ENCODE measurements at regions of chr10 and their contacts with region 1.

Region 1: GRCh38 chr10:31808258-31809218 is 120.1 kb downstream of the ARHGAP12 start:
- DNase-seq: peak; percentile 28 to 51 (median 35)
- ATAC-seq: peak; percentile 51 to 86 (median 80)
- H3K4me3 ChIP-seq: peak overlapping the region in 11 of 12 donors; percentile 18 to 60 (median 47)
- H3K27ac ChIP-seq: peak overlapping the region; percentile 13 to 86 (median 80)
- H3K4me1 ChIP-seq: peaks cover 0 to 12% (median 0%) of the 10 kb centered on the region in 12 donors
- H3K27me3 ChIP-seq: no peaks in the 10 kb centered on the region
- CTCF ChIP-seq: peak; percentile 37 to 79 (median 62)
- POLR2A ChIP-seq: no peak

Region 2: GRCh38 chr10:30736685-30737232 is 1071.8 kb before region 1 on chr10:
- intact Hi-C with region 1: loop called in 1 of 10 experiments (anchors 10 kb)
- DNase-seq: peak in 1 of 5 donors; percentile 57
- ATAC-seq: peak in 3 of 4 donors; percentile 79 to 91 (median 89)
- H3K4me3 ChIP-seq: no peak overlapping the region
- H3K27ac ChIP-seq: peak overlapping the region in 1 of 12 donors; percentile 71
- H3K4me1 ChIP-seq: peaks cover 0 to 5% (median 0%) of the 10 kb centered on the region in 12 donors
- H3K27me3 ChIP-seq: no peaks in the 10 kb centered on the region
- CTCF ChIP-seq: no peak
- POLR2A ChIP-seq: no peak

Region 3: GRCh38 chr10:31456468-31456867 is 352.1 kb before region 1 on chr10:
- intact Hi-C with region 1: no loop called
- DNase-seq: no peak
- ATAC-seq: no peak
- H3K4me3 ChIP-seq: no peak overlapping the region
- H3K27ac ChIP-seq: no peak overlapping the region
- H3K4me1 ChIP-seq: peaks cover 0 to 32% (median 10%) of the 10 kb centered on the region in 12 donors
- H3K27me3 ChIP-seq: no peaks in the 10 kb centered on the region
- CTCF ChIP-seq: no peak
- POLR2A ChIP-seq: no peak

Region 4: DNA sequence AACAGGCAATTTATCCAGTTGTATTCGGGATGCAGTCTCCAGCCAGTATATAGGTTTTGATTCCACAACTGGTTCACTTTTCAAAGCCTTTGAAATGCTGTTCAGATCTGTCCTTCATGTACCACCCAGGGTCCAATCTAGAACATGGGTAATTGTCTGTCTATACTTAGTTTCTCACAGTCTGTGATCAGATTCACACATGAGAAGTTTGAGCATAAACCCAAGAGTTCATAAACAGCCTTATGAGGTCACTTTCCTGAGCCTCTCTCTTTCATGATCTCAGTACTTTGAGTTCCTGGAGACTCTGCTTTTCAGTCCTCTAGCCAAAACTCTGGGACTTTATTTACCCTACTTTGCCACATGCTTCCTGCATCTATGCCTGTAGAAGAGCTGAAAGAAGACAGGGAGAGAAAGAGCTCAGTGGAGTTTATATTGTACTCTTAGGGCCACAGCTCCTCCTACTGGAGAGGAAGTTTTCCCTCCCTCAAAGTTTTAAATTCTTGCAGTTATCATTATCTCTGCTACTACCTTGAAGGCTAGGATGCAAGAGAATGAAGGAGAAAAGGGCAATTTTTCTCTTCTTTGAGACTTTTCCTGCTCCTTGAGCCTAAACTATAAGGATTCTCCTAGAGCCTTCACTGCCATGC is 317.6 kb before region 1 on chr10:
- intact Hi-C with region 1: loop called in 2 of 10 experiments (anchors 10 kb)
- DNase-seq: no peak
- ATAC-seq: peak in 3 of 4 donors; percentile 53 to 73 (median 53)
- H3K4me3 ChIP-seq: no peak overlapping the region
- H3K27ac ChIP-seq: no peak overlapping the region
- H3K4me1 ChIP-seq: peaks cover 0 to 4% (median 0%) of the 10 kb centered on the region in 12 donors
- H3K27me3 ChIP-seq: no peaks in the 10 kb centered on the region
- CTCF ChIP-seq: peak; percentile 38 to 70 (median 57)
- POLR2A ChIP-seq: no peak

Region 5: GRCh38 chr10:31515819-31516402 is 292.6 kb before region 1 on chr10:
- intact Hi-C with region 1: no loop called
- DNase-seq: no peak
- ATAC-seq: no peak
- H3K4me3 ChIP-seq: no peak overlapping the region
- H3K27ac ChIP-seq: no peak overlapping the region
- H3K4me1 ChIP-seq: peaks cover 0 to 22% (median 2%) of the 10 kb centered on the region in 12 donors
- H3K27me3 ChIP-seq: no peaks in the 10 kb centered on the region
- CTCF ChIP-seq: no peak
- POLR2A ChIP-seq: no peak

Region 6: GRCh38 chr10:31656851-31657433 is 151.6 kb before region 1 on chr10:
- intact Hi-C with region 1: loop called in 1 of 10 experiments (anchors 2 kb)
- DNase-seq: no peak
- ATAC-seq: peak; percentile 57 to 79 (median 70)
- H3K4me3 ChIP-seq: no peak overlapping the region
- H3K27ac ChIP-seq: peak overlapping the region in 10 of 12 donors; percentile 23 to 83 (median 66)
- H3K4me1 ChIP-seq: peaks cover 0 to 15% (median 0%) of the 10 kb centered on the region in 12 donors
- H3K27me3 ChIP-seq: no peaks in the 10 kb centered on the region
- CTCF ChIP-seq: no peak
- POLR2A ChIP-seq: no peak

Region 7: DNA sequence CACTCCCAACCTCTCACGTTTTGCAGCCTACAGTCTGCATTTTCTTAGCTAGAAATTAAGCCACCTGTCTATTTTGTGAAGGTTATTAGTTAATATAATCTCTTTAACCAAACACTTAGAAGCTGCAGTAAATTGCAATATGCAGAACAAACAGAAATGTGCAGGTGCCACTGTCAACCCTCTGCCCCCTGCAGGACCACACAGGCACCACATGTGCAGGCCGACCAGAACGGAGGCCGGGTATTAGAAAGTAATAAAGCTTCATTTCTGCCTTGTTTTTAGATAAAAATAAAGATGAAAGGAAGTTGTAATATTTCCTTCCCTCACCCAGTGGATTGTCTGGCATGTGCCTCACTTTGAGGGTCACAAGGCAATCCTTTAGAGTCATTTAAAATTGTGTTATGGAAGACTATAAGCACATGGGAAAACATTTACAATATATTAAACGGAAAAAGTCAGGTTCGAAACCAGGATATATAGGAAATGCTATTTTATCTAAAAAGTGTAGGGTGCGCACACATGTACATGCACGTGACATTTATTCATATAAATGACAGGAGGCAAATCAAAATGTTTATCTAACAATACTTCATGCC is 38.1 kb before region 1 on chr10:
- intact Hi-C with region 1: loop called in 1 of 10 experiments (anchors 5 kb)
- DNase-seq: peak in 2 of 5 donors; percentile 45 to 57
- ATAC-seq: peak in 3 of 4 donors; percentile 49 to 81 (median 62)
- H3K4me3 ChIP-seq: no peak overlapping the region
- H3K27ac ChIP-seq: peak overlapping the region in 2 of 12 donors; percentile 21 to 39
- H3K4me1 ChIP-seq: peaks cover 0 to 14% (median 2%) of the 10 kb centered on the region in 12 donors
- H3K27me3 ChIP-seq: no peaks in the 10 kb centered on the region
- CTCF ChIP-seq: peak; percentile 70 to 89 (median 81)
- POLR2A ChIP-seq: no peak

Region 8: DNA sequence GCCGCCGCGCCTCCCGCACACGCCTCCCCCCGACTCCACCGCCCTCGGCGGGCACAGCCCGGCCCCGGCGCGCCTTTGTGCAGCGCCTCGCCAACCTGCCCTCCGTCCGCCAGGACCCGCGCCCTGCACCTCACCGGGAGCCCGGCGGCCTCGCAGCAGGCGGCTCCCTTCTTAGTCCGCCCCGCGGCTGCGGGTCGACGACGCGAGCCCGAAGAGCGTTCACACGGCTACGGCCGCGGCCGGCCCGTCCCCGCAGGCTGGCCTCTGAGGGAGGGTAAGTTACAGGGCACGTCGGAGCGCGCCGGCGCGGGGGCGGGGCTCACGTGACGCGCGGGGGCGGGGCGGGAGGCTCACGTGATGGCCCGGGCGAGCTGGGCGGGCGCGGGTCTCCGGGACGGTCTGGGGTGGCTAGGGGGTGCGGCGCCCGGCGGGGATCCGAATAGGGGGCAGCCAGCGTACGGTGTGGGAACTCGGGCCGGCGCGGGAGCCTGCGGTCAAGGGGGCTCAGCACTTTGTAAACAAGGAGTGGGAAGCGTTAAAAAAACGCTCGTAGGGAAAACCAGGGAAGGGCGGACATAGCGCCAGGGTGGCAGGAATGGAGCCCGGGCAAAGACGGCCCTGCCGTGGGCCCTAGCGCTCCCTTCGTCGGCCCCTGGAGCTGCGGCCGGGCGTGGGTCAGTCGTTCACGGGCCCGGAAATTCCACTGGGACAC is 120.2 kb after region 1 on chr10 and contains the start of gene ARHGAP12:
- intact Hi-C with region 1: no loop called
- DNase-seq: peak; percentile 92 to 96 (median 93)
- ATAC-seq: peak; percentile 88 to 97 (median 96)
- H3K4me3 ChIP-seq: peak within 1 kb of the TSS; percentile 66 to 97 (median 90)
- H3K27ac ChIP-seq: peak within 1 kb of the TSS; percentile 72 to 99 (median 96)
- H3K4me1 ChIP-seq: peaks cover 0 to 49% (median 28%) of the 10 kb centered on the region in 12 donors
- H3K27me3 ChIP-seq: no peaks in the 10 kb centered on the region
- CTCF ChIP-seq: peak in 2 of 12 donors; percentile 2 to 19
- POLR2A ChIP-seq: peak; percentile 78 to 95
- total RNA-seq, gene ARHGAP12: 17.6 to 27.6 (median 21.2) TPM

Region 9: GRCh38 chr10:32112055-32112454 is 303.5 kb after region 1 on chr10:
- intact Hi-C with region 1: no loop called
- DNase-seq: no peak
- ATAC-seq: peak in 2 of 4 donors; percentile 65 to 70
- H3K4me3 ChIP-seq: no peak overlapping the region
- H3K27ac ChIP-seq: peak overlapping the region in 3 of 12 donors; percentile 44 to 55 (median 52)
- H3K4me1 ChIP-seq: peaks cover 0 to 12% (median 0%) of the 10 kb centered on the region in 12 donors
- H3K27me3 ChIP-seq: no peaks in the 10 kb centered on the region
- CTCF ChIP-seq: no peak
- POLR2A ChIP-seq: no peak